AG04449 (cell line): ENCODE measurements at regions of chr7 and their contacts with region 1.

Region 1: DNA sequence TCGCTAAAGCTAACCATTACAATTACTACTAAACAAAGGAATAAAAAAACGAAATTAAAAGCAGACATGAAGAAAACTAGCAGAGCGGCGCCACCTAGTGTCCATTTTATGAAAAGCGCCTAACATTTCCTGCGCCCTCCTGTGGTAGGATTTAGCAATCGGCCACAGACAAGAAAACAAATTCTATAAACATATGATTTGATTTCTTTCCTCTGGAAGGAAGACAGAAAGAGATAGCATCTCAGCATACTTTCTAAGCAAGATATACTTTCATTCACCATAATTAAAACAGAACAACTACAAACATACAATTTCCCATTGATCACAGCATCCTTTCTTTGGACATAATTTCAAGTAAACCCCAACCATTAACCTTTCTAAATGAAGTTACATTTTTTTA is 337.7 kb upstream of the NPVF start:
- DNase-seq: peak; percentile 17
- H3K4me3 ChIP-seq: no peak overlapping the region
- CTCF ChIP-seq: peak; percentile 94

Region 2: GRCh38 chr7:25259587-25260243 is 306.2 kb before region 1 on chr7:
- CTCF ChIA-PET with region 1: interaction called, 164 read pairs
- POLR2A ChIA-PET with region 1: no interaction called
- DNase-seq: peak; percentile 36
- H3K4me3 ChIP-seq: no peak overlapping the region
- CTCF ChIP-seq: peak; percentile 83

Region 3: GRCh38 chr7:25381818-25382589 is 183.9 kb before region 1 on chr7:
- CTCF ChIA-PET with region 1: interaction called, 11 read pairs
- POLR2A ChIA-PET with region 1: no interaction called
- DNase-seq: no peak
- H3K4me3 ChIP-seq: no peak overlapping the region
- CTCF ChIP-seq: no peak

Region 4: GRCh38 chr7:25389489-25390106 is 176.4 kb before region 1 on chr7:
- CTCF ChIA-PET with region 1: interaction called, 87 read pairs
- POLR2A ChIA-PET with region 1: no interaction called
- DNase-seq: no peak
- H3K4me3 ChIP-seq: no peak overlapping the region
- CTCF ChIP-seq: peak; percentile 30

Region 5: DNA sequence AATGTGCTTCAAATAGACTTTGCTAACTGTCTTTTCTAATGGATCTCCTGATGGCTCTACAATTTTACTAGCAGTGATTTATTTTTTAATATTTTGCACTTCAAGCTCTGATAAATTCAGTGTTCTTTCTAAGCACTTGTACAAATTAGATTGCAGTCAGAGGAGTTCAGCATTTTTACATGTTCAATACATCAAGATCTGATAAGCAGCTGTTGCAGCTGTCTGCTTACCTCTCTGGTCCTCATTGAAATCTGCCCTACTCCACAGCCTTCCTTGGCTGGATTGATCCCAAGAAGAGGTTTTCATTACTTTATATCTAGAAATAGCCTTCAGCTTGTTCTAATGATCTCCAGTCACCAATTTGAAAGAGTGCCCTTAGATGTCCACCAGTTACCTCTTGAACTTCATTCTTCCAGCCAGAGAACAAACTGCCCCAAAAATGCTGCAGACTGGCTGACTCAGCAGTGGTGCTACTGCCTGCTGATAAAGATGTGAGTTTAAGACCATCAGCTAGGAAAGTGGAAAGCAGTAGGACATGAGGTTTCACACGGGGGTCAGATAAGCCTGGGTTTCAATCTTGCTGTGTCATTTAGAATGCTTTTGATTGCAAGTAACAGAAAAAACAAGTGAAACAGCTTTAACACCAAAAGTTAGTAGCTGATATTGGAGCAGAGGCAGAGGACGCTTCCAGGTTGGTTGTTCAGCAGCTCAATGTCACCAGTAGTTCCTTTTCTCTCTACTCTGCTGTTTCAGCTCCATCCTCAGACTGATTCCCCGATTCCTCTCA is 13.2 kb after region 1 on chr7:
- CTCF ChIA-PET with region 1: interaction called, 22 read pairs
- POLR2A ChIA-PET with region 1: no interaction called
- DNase-seq: no peak
- H3K4me3 ChIP-seq: no peak overlapping the region
- CTCF ChIP-seq: no peak

Region 6: DNA sequence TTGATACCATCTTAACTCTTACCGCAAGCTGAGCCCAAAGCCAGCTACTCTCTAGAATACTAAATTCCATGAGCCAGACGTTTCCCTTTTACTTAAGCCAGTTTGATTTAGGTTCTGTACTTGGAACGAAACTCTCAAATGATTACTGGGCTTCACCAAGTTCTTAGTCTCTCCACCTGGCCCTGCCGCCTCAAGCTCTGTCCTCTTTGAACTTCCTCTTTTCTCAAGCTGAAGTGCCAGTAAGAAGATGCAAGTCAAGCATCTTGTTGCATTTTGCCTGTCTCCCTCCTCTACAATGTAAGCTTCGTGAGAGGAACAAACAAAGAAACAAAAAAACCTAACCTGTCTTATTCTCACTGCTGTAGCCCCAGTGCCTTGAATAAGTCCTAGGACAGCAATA is 20.6 kb after region 1 on chr7:
- CTCF ChIA-PET with region 1: interaction called, 16 read pairs
- POLR2A ChIA-PET with region 1: no interaction called
- DNase-seq: no peak
- H3K4me3 ChIP-seq: no peak overlapping the region
- CTCF ChIP-seq: no peak